CD4-positive, alpha-beta T cell (primary cell): ENCODE measurements at regions of chr3 and their contacts with region 1.

Region 1: DNA sequence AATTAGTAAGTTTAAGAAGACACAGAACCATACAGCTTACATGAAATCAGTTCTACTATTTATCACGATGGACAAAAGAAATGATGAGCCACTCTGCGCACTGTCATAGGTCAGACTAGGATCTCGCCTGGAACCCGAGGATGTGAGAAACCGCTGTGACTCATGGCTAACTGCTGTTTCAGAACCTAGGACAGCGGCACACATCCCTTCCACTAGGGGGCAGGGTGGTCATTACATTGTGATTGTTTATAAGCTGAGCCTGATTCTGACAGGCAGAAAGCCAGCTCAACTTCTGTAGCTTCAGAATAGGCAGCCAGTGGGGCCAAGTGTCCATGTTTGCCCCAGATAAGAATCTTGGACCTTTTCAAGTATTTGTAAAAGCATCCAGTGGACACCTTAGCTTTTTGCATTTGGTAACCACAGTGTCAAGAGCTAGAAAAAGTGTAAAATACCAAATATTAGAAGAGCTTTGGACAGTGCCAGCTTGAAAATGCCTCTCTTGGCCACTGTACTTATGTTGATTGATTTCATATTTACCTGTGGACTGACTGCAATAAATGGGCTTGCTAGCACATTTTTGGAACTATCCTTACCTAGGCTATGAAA is 115.8 kb downstream of the KBTBD8 start:
- DNase-seq: peak; percentile 56 to 83 (median 72)
- ATAC-seq: peak; percentile 74
- H3K4me3 ChIP-seq: no peak overlapping the region
- H3K4me3 Mint-ChIP-seq: no peak overlapping the region
- H3K27ac ChIP-seq: no peak overlapping the region
- H3K27ac Mint-ChIP-seq: no peak overlapping the region
- H3K4me1 ChIP-seq: no peaks in the 10 kb centered on the region
- H3K4me1 Mint-ChIP-seq: no peaks in the 10 kb centered on the region
- H3K27me3 ChIP-seq: peaks cover 0 to 11% of the 10 kb centered on the region in 2 experiments
- H3K27me3 Mint-ChIP-seq: peaks cover 37% of the 10 kb centered on the region
- CTCF ChIP-seq: peak; percentile 95

Region 2: GRCh38 chr3:66971891-66972551 is 141.9 kb before region 1 on chr3:
- CTCF ChIA-PET with region 1: interaction called, 12 read pairs
- POLR2A ChIA-PET with region 1: no interaction called
- intact Hi-C with region 1: loop called (anchors 5 to 10 kb)
- DNase-seq: peak; percentile 35 to 78 (median 51)
- ATAC-seq: peak; percentile 93
- H3K4me3 ChIP-seq: peak overlapping the region; percentile 65
- H3K4me3 Mint-ChIP-seq: peak overlapping the region; percentile 92
- H3K27ac ChIP-seq: peak overlapping the region in 1 of 2 donors; percentile 53
- H3K27ac Mint-ChIP-seq: peak overlapping the region; percentile 69
- H3K4me1 ChIP-seq: peaks cover 12% of the 10 kb centered on the region
- H3K4me1 Mint-ChIP-seq: peaks cover 18% of the 10 kb centered on the region
- H3K27me3 ChIP-seq: no peaks in the 10 kb centered on the region
- H3K27me3 Mint-ChIP-seq: peaks cover 7% of the 10 kb centered on the region
- CTCF ChIP-seq: peak; percentile 87

Region 3: DNA sequence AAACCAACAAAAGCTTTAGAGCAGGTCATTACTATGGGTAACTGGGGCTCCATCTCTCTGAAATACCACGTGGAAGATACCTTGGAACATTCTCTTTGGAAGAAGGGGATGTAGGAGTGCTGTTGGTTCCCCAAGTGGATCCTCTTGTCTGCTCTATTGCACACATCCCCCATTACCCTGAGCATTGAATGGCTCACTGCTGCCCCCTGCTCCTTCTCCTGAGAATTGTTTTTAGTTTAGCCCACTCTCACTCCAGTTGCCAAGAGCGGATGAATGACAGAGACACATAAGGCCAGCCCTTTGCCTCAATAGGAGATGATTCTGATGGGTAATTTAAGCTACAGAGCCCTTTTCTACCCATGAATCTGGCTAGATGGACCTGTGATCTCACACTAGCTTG is 676.1 kb after region 1 on chr3:
- CTCF ChIA-PET with region 1: interaction called, 15 read pairs
- POLR2A ChIA-PET with region 1: interaction called, 3 read pairs
- intact Hi-C with region 1: loop called in 1 of 2 experiments (anchors 1 kb)
- DNase-seq: peak; percentile 31 to 79 (median 60)
- ATAC-seq: peak; percentile 73
- H3K4me3 ChIP-seq: no peak overlapping the region
- H3K4me3 Mint-ChIP-seq: no peak overlapping the region
- H3K27ac ChIP-seq: no peak overlapping the region
- H3K27ac Mint-ChIP-seq: no peak overlapping the region
- H3K4me1 ChIP-seq: peaks cover 5% of the 10 kb centered on the region
- H3K4me1 Mint-ChIP-seq: peaks cover 16% of the 10 kb centered on the region
- H3K27me3 ChIP-seq: no peaks in the 10 kb centered on the region
- H3K27me3 Mint-ChIP-seq: no peaks in the 10 kb centered on the region
- CTCF ChIP-seq: peak; percentile 84

Region 4: GRCh38 chr3:68306571-68306970 is 1192.7 kb after region 1 on chr3:
- CTCF ChIA-PET with region 1: no interaction called
- POLR2A ChIA-PET with region 1: no interaction called
- intact Hi-C with region 1: loop called in 1 of 2 experiments (anchors 10 kb)
- DNase-seq: peak in 4 of 14 experiments; percentile 3 to 34 (median 22)
- ATAC-seq: no peak
- H3K4me3 ChIP-seq: no peak overlapping the region
- H3K4me3 Mint-ChIP-seq: no peak overlapping the region
- H3K27ac ChIP-seq: no peak overlapping the region
- H3K27ac Mint-ChIP-seq: no peak overlapping the region
- H3K4me1 ChIP-seq: no peaks in the 10 kb centered on the region
- H3K4me1 Mint-ChIP-seq: no peaks in the 10 kb centered on the region
- H3K27me3 ChIP-seq: no peaks in the 10 kb centered on the region
- H3K27me3 Mint-ChIP-seq: no peaks in the 10 kb centered on the region
- CTCF ChIP-seq: no peak

Region 5: GRCh38 chr3:68893600-68894239 is 1779.8 kb after region 1 on chr3:
- CTCF ChIA-PET with region 1: interaction called, 9 read pairs
- POLR2A ChIA-PET with region 1: interaction called, 5 read pairs
- intact Hi-C with region 1: loop called (anchors 1 to 5 kb)
- DNase-seq: peak in 4 of 14 experiments; percentile 4 to 60 (median 52)
- ATAC-seq: no peak
- H3K4me3 ChIP-seq: no peak overlapping the region
- H3K4me3 Mint-ChIP-seq: no peak overlapping the region
- H3K27ac ChIP-seq: no peak overlapping the region
- H3K27ac Mint-ChIP-seq: no peak overlapping the region
- H3K4me1 ChIP-seq: no peaks in the 10 kb centered on the region
- H3K4me1 Mint-ChIP-seq: no peaks in the 10 kb centered on the region
- H3K27me3 ChIP-seq: peaks cover 0 to 4% of the 10 kb centered on the region in 2 experiments
- H3K27me3 Mint-ChIP-seq: peaks cover 14% of the 10 kb centered on the region
- CTCF ChIP-seq: peak; percentile 77